RWPE1 (cell line): ENCODE measurements at regions of chr16 and their contacts with region 1.

Region 1: DNA sequence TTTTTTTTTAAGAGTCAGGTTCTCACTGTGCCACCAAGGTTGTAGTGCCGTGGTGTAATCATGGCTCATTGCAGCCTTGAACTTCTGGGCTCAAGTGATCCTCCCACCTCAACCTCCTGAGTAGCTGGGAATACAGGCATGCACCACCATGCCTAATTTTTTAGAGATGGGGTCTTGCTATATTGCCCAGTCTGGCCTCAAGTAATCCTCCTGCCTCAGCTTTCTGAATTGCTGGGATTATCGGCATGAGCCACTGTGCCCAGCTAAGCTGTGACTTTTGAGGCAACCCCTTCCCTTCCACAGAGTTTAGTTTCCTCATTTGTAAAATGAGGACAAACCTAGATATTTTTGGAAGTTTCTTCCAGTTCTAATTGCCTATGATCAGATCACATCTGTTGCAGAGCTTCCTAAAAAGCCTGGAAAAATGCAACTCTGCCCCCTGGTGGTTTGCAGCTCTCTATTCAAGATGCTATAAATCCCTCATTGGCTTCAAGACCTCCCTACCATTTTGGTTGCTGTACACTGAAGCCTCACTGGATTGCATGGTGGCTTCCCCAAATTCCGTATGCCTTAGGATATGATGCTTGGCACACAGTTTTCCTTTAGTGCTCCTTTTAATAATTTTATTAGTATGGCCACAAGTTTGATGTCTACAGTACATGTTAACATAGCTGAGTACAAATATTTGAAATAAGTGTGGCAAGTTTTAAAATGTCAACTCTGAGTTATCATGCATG is 19.3 kb downstream of the GDE1 start:
- DNase-seq: peak; percentile 65
- H3K27ac ChIP-seq: no peak overlapping the region
- CTCF ChIP-seq: peak; percentile 78

Region 2: GRCh38 chr16:19252904-19253303 is 249.7 kb before region 1 on chr16:
- CTCF ChIA-PET with region 1: no interaction called
- POLR2A ChIA-PET with region 1: no interaction called
- DNase-seq: no peak
- H3K27ac ChIP-seq: no peak overlapping the region
- CTCF ChIP-seq: no peak

Region 3: DNA sequence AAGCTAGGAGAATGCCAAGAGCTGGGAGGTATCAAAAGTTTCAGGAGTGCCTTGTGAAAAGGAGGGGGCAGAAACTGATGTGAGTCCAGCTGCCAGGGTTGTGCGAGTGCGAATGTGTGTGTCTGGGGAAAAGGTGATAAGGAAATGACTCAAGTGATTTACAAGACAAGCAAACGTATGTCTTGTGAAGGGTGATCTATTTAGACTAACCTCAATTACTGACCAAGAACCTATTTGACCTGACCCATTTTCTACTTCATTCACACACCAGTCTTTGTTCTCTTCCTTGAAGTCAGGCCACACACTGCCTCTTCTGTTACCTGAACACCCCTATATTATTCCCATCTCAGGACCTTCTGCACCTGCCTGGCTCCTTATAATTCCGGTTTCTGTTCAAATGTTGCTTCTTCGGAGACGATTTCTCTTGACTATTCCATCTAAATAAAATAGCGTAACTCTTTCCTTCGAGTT is 18.3 kb after region 1 on chr16:
- CTCF ChIA-PET with region 1: interaction called, 11 read pairs
- POLR2A ChIA-PET with region 1: no interaction called
- DNase-seq: no peak
- H3K27ac ChIP-seq: peak overlapping the region; percentile 66
- CTCF ChIP-seq: no peak

Region 4: GRCh38 chr16:19710191-19710908 is 207.8 kb after region 1 on chr16:
- CTCF ChIA-PET with region 1: no interaction called
- POLR2A ChIA-PET with region 1: no interaction called
- DNase-seq: no peak
- H3K27ac ChIP-seq: no peak overlapping the region; the same call in 1 of the 2 replicates
- CTCF ChIP-seq: no peak